Naive thymus-derived CD4-positive, alpha-beta T cell (primary cell): ENCODE measurements at regions of chr4 and their contacts with region 1.

Region 1: DNA sequence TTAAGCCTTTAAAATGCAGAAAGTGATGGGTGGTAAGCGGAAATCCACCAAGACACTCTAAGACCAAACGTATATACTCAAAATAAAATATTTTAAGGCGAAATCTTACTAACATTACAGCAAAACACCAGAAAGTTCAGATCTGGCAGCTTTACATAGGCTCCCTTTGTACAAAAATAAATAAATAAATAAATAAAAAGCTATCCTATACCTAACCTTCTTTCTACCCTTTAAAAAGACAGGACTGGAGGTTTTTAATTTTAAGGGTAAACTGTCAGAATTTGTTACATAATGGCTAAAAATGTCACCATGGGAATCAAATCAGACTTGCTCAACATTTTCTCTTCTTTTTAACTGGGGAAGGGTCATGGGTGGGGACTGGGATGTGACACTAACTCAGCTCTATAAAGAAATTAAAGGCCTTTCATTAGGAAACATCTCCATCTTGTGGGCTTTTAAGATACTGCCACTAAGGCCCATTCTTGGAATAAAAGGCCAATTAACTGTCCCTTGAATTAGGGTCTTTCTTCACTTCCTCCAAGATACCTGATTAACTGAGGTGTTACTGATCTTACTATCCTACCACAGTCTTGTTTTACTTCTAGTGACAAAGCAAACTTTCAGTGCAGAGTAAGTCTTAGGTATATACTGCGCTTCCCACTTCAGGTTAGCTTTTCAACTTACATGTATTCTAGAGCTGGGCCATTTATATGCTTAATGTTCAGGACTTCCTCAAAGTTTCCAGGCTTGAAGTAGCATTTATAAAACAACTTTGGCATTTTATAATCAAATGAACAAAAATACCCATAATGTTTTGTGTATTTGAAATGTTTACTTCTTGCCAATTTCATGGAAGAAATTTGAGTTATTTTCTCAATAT is 13.3 kb downstream of the HNRNPD start:
- DNase-seq: peak in 6 of 9 donors; percentile 17 to 33 (median 31)
- ATAC-seq: peak; percentile 70
- H3K4me3 ChIP-seq: no peak overlapping the region
- H3K4me3 Mint-ChIP-seq: peak overlapping the region in 7 of 10 donors; percentile 0 to 56 (median 36)
- H3K27ac ChIP-seq: peak overlapping the region; percentile 18
- H3K27ac Mint-ChIP-seq: peak overlapping the region in 8 of 9 donors; percentile 34 to 85 (median 54)
- H3K4me1 ChIP-seq: peaks cover 62 to 74% of the 10 kb centered on the region in 2 donors
- H3K4me1 Mint-ChIP-seq: peaks cover 64 to 98% (median 89%) of the 10 kb centered on the region in 7 donors
- H3K27me3 ChIP-seq: no peaks in the 10 kb centered on the region
- H3K27me3 Mint-ChIP-seq: no peaks in the 10 kb centered on the region

Region 2: GRCh38 chr4:82284858-82285805 is 75.4 kb before region 1 on chr4:
- CTCF ChIA-PET with region 1: interaction called, 5 read pairs
- POLR2A ChIA-PET with region 1: interaction called, 3 read pairs
- intact Hi-C with region 1: loop called in 1 of 2 experiments (anchors 2 kb)
- DNase-seq: peak; percentile 97 to 100 (median 99)
- ATAC-seq: peak; percentile 94
- H3K4me3 ChIP-seq: peak overlapping the region; percentile 55
- H3K4me3 Mint-ChIP-seq: peak overlapping the region; percentile 70 to 91 (median 86)
- H3K27ac ChIP-seq: peak overlapping the region; percentile 71
- H3K27ac Mint-ChIP-seq: peak overlapping the region; percentile 53 to 94 (median 83)
- H3K4me1 ChIP-seq: peaks cover 4 to 11% of the 10 kb centered on the region in 2 donors
- H3K4me1 Mint-ChIP-seq: peaks cover 9 to 22% (median 13%) of the 10 kb centered on the region in 7 donors
- H3K27me3 ChIP-seq: no peaks in the 10 kb centered on the region
- H3K27me3 Mint-ChIP-seq: peaks cover 0 to 28% (median 0%) of the 10 kb centered on the region in 5 donors

Region 3: GRCh38 chr4:82346126-82346525 is 14.4 kb before region 1 on chr4:
- CTCF ChIA-PET with region 1: interaction called, 6 read pairs
- POLR2A ChIA-PET with region 1: interaction called, 3 read pairs
- intact Hi-C with region 1: loop called in 1 of 2 experiments (anchors 2 kb)
- DNase-seq: no peak
- ATAC-seq: no peak
- H3K4me3 ChIP-seq: no peak overlapping the region
- H3K4me3 Mint-ChIP-seq: no peak overlapping the region
- H3K27ac ChIP-seq: no peak overlapping the region
- H3K27ac Mint-ChIP-seq: peak overlapping the region in 1 of 9 donors; percentile 15
- H3K4me1 ChIP-seq: no peaks in the 10 kb centered on the region
- H3K4me1 Mint-ChIP-seq: peaks cover 7 to 26% (median 16%) of the 10 kb centered on the region in 7 donors
- H3K27me3 ChIP-seq: no peaks in the 10 kb centered on the region
- H3K27me3 Mint-ChIP-seq: no peaks in the 10 kb centered on the region

Region 4: DNA sequence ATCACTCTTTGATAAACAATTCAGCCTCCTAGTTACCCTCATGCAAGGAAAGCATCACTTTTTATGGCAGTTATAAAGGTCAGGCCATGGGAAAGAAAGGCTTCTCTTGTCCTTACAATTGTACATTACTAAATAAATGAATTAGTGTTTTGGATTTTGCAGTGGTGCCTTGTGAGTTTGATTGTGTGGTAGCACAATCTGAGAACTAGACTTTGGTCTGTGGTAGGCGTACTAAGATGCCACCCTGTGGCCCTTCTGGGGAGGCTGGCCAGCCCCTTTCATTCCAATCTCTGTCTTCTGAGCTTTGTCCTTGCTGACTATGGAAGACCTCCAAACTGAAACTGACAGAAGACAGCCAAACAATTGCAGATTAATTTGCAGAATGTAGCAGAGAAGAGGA is 27.9 kb after region 1 on chr4:
- CTCF ChIA-PET with region 1: interaction called, 4 read pairs
- POLR2A ChIA-PET with region 1: interaction called, 3 read pairs
- intact Hi-C with region 1: loop called in 1 of 2 experiments (anchors 1 kb)
- DNase-seq: no peak
- ATAC-seq: no peak
- H3K4me3 ChIP-seq: no peak overlapping the region
- H3K4me3 Mint-ChIP-seq: no peak overlapping the region
- H3K27ac ChIP-seq: no peak overlapping the region
- H3K27ac Mint-ChIP-seq: no peak overlapping the region
- H3K4me1 ChIP-seq: no peaks in the 10 kb centered on the region
- H3K4me1 Mint-ChIP-seq: peaks cover 0 to 5% (median 2%) of the 10 kb centered on the region in 7 donors
- H3K27me3 ChIP-seq: no peaks in the 10 kb centered on the region
- H3K27me3 Mint-ChIP-seq: peaks cover 0 to 10% (median 6%) of the 10 kb centered on the region in 5 donors